Activated T-helper 1 cell treated with anti-CD3 and anti-CD28 coated beads, Interleukin-12 subunit alpha, Interleukin-12 subunit beta, Interleukin-2, Interleukin-4 antibody, amounts not matched to agents 30 ng/mL and 10 ng/mL and 1 ng/mL, durations not matched to agents 14 hours and 24 hours and 36 hours (primary cell): ENCODE measurements at regions of chrX and their contacts with region 1.

Region 1: GRCh38 chrX:149504915-149505651 is at the start of gene IDS:
- DNase-seq: peak; percentile 87
- H3K4me3 Mint-ChIP-seq: peak within 1 kb of the TSS; percentile 99
- H3K27ac Mint-ChIP-seq: peak within 1 kb of the TSS; percentile 100
- H3K4me1 Mint-ChIP-seq: peaks cover 45% of the 10 kb centered on the region
- H3K27me3 Mint-ChIP-seq: no peaks in the 10 kb centered on the region
- total RNA-seq, gene IDS: 46.6 and 48.9 TPM in 2 replicates

Region 2: GRCh38 chrX:148380650-148381561 is 1124.2 kb before region 1 on chrX:
- intact Hi-C with region 1: loop called (anchors 10 kb)
- DNase-seq: peak; percentile 44
- H3K4me3 Mint-ChIP-seq: peak overlapping the region; percentile 74
- H3K27ac Mint-ChIP-seq: peak overlapping the region; percentile 91
- H3K4me1 Mint-ChIP-seq: peaks cover 28% of the 10 kb centered on the region
- H3K27me3 Mint-ChIP-seq: no peaks in the 10 kb centered on the region

Region 3: DNA sequence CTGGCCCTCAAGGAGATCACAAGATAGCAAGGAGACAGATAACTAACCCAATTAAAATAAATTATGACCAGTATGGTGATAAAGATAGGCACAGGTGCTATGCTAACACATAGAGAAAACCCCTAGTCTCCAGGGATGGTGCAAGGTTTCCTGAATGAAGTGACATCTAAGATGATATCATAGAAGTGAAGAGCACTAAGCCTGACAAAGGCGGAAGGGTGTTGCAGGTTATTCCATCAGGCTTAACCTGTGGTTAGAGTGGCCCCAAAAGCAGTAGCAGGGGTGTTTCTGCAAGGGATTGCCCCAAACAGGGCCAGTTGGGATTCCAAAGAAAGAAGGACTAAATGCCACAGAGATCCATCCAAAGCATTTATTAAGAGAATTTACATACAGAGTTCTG is 249.2 kb before region 1 on chrX:
- intact Hi-C with region 1: no loop called
- DNase-seq: no peak
- H3K4me3 Mint-ChIP-seq: no peak overlapping the region
- H3K27ac Mint-ChIP-seq: no peak overlapping the region
- H3K4me1 Mint-ChIP-seq: no peaks in the 10 kb centered on the region
- H3K27me3 Mint-ChIP-seq: no peaks in the 10 kb centered on the region

Region 4: DNA sequence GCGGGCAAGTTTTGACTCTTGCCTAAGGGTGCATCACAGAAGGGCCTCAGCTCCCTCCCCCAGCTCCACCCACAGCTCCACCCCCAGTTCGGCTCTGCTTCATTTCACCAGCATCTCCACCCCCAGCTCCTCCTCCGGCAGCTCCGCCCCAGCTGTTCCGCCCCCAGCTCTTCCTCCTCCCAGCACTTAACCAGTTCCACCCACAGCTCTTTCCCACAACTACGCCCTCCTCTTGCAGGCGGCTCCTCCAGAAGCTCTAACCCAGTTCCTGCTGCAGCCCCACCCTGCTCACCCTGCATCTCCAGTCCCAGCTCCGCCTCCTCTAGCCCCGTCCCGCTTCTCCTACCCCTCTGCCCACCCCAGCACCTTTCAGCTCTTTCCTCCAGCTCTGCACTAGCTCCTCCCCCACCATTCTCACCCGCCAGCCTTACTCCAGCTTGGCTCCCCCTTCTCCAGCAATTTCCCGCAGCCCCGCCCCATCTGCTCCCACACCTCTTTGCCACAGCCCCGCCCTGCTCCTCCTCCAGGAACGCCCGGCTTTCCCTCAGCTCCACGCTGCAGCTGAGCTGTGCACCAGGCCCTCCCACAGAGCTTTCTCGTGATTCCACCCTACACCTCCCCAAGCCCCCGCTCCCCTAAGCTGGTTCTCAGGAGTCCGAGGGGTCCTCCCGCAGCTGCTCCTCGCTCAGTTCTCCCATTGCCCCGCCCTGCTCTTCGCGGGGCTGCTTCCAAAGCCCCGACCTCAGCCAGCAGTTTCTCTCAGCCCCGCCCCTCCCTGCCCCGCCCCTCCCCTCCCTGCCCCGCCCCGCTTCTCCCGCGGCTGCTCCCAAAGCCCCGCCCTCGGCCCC is 34.4 kb after region 1 on chrX:
- intact Hi-C with region 1: loop called (anchors 2 kb)
- DNase-seq: peak; percentile 82
- H3K4me3 Mint-ChIP-seq: peak overlapping the region; percentile 92
- H3K27ac Mint-ChIP-seq: peak overlapping the region; percentile 91
- H3K4me1 Mint-ChIP-seq: peaks cover 7% of the 10 kb centered on the region
- H3K27me3 Mint-ChIP-seq: no peaks in the 10 kb centered on the region

Region 5: GRCh38 chrX:149631234-149632165 is 126.4 kb after region 1 on chrX and contains the start of gene TMEM185A:
- intact Hi-C with region 1: loop called (anchors 1 kb)
- DNase-seq: peak; percentile 73
- H3K4me3 Mint-ChIP-seq: peak within 1 kb of the TSS; percentile 95
- H3K27ac Mint-ChIP-seq: peak within 1 kb of the TSS; percentile 85
- H3K4me1 Mint-ChIP-seq: peaks cover 43% of the 10 kb centered on the region
- H3K27me3 Mint-ChIP-seq: peaks cover 1% of the 10 kb centered on the region
- total RNA-seq, gene TMEM185A: 18.7 and 25.5 TPM in 2 replicates

Region 6: DNA sequence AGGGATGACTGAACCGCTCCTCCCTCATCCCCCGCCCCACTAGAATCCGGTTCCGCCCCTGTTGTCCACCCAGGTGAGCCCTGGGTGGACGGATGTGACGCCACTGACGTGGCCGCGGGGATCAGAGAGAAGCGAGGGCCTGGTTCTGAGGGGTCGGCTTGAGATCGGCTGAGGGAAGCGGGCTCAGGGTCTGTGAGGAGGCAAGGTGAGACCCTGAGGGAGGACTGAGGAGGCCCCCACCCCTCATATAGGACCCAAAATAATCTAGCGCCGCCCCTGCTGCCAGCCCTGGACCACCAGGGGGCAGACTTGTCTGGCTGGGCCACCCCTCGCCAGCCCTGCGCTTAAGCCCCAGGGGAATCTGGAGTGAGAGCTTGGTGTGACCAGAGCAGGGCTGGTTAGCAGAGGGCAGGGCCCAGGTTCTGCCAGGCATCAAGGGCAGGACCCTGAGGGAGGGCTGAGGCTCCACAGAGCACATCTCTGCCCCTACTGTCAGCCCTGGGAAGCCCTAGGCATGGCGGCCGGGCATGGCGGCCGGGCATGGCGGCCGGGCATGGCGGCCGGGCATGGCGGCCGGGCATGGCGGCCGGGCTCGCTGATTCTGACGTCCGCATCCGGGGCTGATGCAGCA is 376.1 kb after region 1 on chrX and contains the start of gene MAGEA8:
- intact Hi-C with region 1: no loop called
- DNase-seq: no peak
- H3K4me3 Mint-ChIP-seq: no peak within 1 kb of the TSS
- H3K27ac Mint-ChIP-seq: no peak within 1 kb of the TSS
- H3K4me1 Mint-ChIP-seq: peaks cover 8% of the 10 kb centered on the region
- H3K27me3 Mint-ChIP-seq: peaks cover 7% of the 10 kb centered on the region
- total RNA-seq, gene MAGEA8: not detected in 2 replicates

Region 7: DNA sequence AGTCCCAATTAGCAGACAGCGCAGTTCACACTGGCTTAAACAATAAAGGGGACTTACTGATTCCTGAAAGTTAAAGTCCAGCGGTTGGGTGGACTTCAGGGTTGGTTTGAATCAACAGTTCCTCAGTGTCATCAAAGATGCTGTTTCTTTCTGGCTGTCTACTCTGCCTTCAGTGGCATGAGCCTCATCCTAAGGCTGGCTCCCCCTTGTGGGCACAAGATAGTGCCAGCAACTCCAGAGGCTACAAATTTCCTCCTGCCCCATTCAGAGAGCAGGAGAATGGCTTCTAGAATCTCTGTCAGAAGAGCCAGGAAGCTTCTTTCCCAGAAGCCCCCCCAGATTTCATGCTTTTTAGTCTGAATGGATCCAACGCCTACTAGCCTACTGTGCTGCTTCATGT is 980.9 kb after region 1 on chrX:
- intact Hi-C with region 1: loop called (anchors 10 kb)
- DNase-seq: peak; percentile 36
- H3K4me3 Mint-ChIP-seq: no peak overlapping the region
- H3K27ac Mint-ChIP-seq: no peak overlapping the region
- H3K4me1 Mint-ChIP-seq: peaks cover 55% of the 10 kb centered on the region
- H3K27me3 Mint-ChIP-seq: no peaks in the 10 kb centered on the region

Region 8: GRCh38 chrX:150693775-150694574 is 1188.9 kb after region 1 on chrX:
- intact Hi-C with region 1: loop called (anchors 10 kb)
- DNase-seq: peak; percentile 66
- H3K4me3 Mint-ChIP-seq: peak overlapping the region; percentile 91
- H3K27ac Mint-ChIP-seq: peak overlapping the region; percentile 97
- H3K4me1 Mint-ChIP-seq: peaks cover 65% of the 10 kb centered on the region
- H3K27me3 Mint-ChIP-seq: no peaks in the 10 kb centered on the region

Region 9: DNA sequence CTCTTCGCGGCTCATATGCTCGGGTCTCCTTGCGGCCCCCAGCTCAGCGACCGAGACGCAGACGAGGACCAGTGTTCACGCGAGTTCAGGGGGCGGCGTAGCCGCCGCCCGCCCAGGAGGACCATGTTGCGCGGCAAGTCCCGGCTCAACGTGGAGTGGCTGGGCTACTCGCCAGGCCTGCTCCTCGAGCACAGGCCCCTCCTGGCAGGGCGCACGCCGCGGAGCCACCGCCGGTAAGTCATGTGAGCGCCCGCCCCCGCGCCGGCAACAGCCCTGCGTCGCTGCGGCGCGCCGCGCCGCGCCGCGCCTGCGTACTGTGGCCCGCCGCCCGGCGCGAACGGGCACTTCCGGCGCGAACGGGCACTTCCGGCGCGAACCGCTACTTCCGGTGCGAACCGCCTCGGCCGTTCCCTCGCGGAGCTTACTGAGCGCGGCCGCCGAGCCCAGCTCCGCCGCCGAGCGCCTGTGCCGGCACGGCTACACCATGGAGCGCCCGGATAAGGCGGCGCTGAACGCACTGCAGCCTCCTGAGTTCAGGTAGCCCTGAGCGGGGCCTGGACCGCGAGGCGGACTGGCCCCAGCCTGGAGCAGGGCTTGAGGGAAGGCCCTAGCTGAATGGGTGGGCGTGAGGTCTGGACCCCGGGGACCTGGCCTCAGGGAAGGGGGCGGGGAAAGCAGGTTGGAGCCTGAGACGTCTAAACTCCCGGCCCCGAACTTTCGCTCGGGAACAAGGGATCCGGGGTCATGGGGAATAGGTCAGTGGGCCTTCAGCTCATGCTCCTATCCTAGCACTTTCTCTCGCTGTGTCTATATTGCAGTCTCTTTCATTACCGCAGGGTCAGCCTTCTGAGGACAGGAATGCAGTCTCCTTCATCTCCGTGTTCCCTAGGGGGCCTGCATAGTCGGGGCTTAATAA is 1892.0 kb after region 1 on chrX and contains the start of gene VMA21:
- intact Hi-C with region 1: loop called (anchors 10 kb)
- DNase-seq: peak; percentile 79
- H3K4me3 Mint-ChIP-seq: peak within 1 kb of the TSS; percentile 93
- H3K27ac Mint-ChIP-seq: peak within 1 kb of the TSS; percentile 94
- H3K4me1 Mint-ChIP-seq: peaks cover 52% of the 10 kb centered on the region
- H3K27me3 Mint-ChIP-seq: peaks cover 3% of the 10 kb centered on the region
- total RNA-seq, gene VMA21: 39.4 and 49.2 TPM in 2 replicates